Activated B cell treated with CpG ODN at 0.5 μM for 24 hours (primary cell): ENCODE measurements at regions of chr10 and their contacts with region 1.

Region 1: DNA sequence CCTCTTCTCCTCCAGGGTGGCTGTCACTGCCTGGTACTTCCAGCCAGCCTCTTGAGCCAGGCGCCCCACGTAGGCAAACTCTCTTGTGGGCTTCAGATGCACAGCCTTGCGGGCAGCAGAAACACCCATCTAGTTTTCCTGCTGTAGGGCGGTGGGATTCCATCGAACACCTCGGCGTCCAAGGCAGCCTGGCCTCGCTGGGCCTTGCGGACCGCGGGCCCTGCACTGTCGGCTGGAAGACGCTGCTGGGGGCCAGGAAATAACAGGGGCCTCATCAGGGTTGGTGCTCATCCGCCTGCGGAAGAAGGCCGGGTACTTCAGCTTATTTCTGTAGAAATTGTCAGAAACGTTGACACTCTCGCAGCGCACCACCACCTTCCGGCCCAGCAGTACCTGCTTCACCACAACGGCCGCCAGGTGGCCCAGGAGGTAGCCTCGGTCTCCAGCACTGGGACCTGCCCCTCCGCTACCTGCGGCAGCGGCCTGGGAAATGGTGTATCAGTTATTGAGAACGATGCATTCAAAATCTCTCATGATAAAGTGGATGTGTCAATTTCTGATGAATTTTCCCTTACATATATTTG is 61.1 kb downstream of the WDFY4 start:
- DNase-seq: no peak
- ATAC-seq: no peak
- H3K4me3 Mint-ChIP-seq: no peak overlapping the region
- H3K27ac Mint-ChIP-seq: no peak overlapping the region
- H3K4me1 Mint-ChIP-seq: peaks cover 55% of the 10 kb centered on the region
- H3K27me3 Mint-ChIP-seq: no peaks in the 10 kb centered on the region
- CTCF ChIP-seq: no peak

Region 2: DNA sequence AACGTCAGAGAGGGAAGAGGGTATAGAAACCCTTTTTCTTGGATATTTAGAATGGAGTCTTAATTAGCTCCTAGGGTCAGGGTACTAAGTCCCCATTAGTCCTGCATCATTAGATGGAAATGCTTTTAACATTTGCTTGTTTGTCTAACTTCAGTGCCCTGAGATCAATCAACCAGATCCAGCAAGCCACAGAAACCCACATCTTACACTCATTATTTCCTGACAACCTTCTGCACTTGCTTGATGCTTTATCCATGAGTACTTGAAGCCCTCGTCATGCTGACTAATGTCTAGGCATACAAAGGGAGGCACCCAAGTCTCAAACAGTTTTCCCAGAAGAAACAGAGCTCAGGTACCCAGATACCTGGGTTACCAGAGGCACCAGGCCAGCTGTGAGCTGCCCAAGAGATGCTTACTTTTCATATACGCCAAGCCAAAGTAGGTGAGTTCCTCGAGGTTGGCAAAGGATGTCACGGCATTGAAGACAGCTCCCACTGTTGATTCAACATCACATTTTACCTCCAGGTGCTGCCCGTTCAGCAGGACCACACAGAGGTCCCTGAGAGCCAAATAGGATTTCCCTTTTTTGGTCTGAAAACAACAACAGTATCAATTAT is 513.9 kb before region 1 on chr10:
- CTCF ChIA-PET with region 1: no interaction called
- POLR2A ChIA-PET with region 1: no interaction called
- intact Hi-C with region 1: no loop called
- DNase-seq: no peak
- ATAC-seq: no peak
- H3K4me3 Mint-ChIP-seq: no peak overlapping the region
- H3K27ac Mint-ChIP-seq: no peak overlapping the region
- H3K4me1 Mint-ChIP-seq: no peaks in the 10 kb centered on the region
- H3K27me3 Mint-ChIP-seq: peaks cover 20% of the 10 kb centered on the region
- CTCF ChIP-seq: no peak

Region 3: GRCh38 chr10:48564466-48565160 is 181.1 kb before region 1 on chr10:
- CTCF ChIA-PET with region 1: no interaction called
- POLR2A ChIA-PET with region 1: interaction called, 16 read pairs
- intact Hi-C with region 1: no loop called
- DNase-seq: no peak
- ATAC-seq: no peak
- H3K4me3 Mint-ChIP-seq: no peak overlapping the region
- H3K27ac Mint-ChIP-seq: no peak overlapping the region
- H3K4me1 Mint-ChIP-seq: no peaks in the 10 kb centered on the region
- H3K27me3 Mint-ChIP-seq: no peaks in the 10 kb centered on the region
- CTCF ChIP-seq: no peak

Region 4: DNA sequence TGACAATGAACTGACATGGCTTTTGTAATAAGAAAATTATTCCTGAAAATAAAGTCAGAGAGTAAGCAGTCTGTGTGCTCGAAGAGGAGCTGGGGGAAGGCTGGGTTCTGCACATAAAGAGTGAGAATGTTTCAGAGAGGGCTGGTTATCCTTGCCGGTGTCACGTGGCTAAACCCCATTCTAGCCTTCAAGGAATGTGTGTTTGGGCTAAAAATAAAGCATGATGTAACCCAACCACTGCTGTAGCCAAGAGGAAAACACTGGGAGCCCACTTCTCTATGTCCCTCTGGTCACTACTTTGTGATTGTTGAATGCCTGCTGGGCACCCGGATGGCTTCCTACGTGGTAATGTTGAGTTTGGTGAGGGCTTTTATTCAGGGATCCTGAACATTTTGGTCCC is 37.6 kb before region 1 on chr10:
- CTCF ChIA-PET with region 1: no interaction called
- POLR2A ChIA-PET with region 1: no interaction called
- intact Hi-C with region 1: loop called (anchors 5 kb)
- DNase-seq: no peak
- ATAC-seq: no peak
- H3K4me3 Mint-ChIP-seq: no peak overlapping the region
- H3K27ac Mint-ChIP-seq: peak overlapping the region; percentile 30
- H3K4me1 Mint-ChIP-seq: peaks cover 82% of the 10 kb centered on the region
- H3K27me3 Mint-ChIP-seq: no peaks in the 10 kb centered on the region
- CTCF ChIP-seq: no peak

Region 5: GRCh38 chr10:48782386-48782785 is 36.6 kb after region 1 on chr10:
- CTCF ChIA-PET with region 1: no interaction called
- POLR2A ChIA-PET with region 1: no interaction called
- intact Hi-C with region 1: loop called (anchors 5 kb)
- DNase-seq: no peak
- ATAC-seq: no peak
- H3K4me3 Mint-ChIP-seq: no peak overlapping the region
- H3K27ac Mint-ChIP-seq: peak overlapping the region; percentile 41
- H3K4me1 Mint-ChIP-seq: no peaks in the 10 kb centered on the region
- H3K27me3 Mint-ChIP-seq: no peaks in the 10 kb centered on the region
- CTCF ChIP-seq: no peak

Region 6: GRCh38 chr10:48900371-48900801 is 154.6 kb after region 1 on chr10:
- CTCF ChIA-PET with region 1: no interaction called
- POLR2A ChIA-PET with region 1: no interaction called
- intact Hi-C with region 1: no loop called
- DNase-seq: no peak
- ATAC-seq: no peak
- H3K4me3 Mint-ChIP-seq: no peak overlapping the region
- H3K27ac Mint-ChIP-seq: no peak overlapping the region
- H3K4me1 Mint-ChIP-seq: no peaks in the 10 kb centered on the region
- H3K27me3 Mint-ChIP-seq: no peaks in the 10 kb centered on the region
- CTCF ChIP-seq: no peak